ENCODE measurements at regions of chr22 and their contacts with region 1.

Region 1: GRCh38 chr22:30289134-30289979 is at the start of gene CASTOR1:
- DNase-seq: peak; percentile 92
- H3K4me3 Mint-ChIP-seq: peak within 1 kb of the TSS; percentile 87
- H3K27ac Mint-ChIP-seq: peak within 1 kb of the TSS; percentile 80
- H3K4me1 Mint-ChIP-seq: peaks cover 35% of the 10 kb centered on the region
- H3K27me3 Mint-ChIP-seq: no peaks in the 10 kb centered on the region
- total RNA-seq, gene CASTOR1: 11.1 TPM in 2 replicates

Region 2: GRCh38 chr22:30253205-30253852 is 36.0 kb before region 1 on chr22:
- intact Hi-C with region 1: loop called (anchors 5 kb)
- DNase-seq: no peak
- H3K4me3 Mint-ChIP-seq: no peak overlapping the region
- H3K27ac Mint-ChIP-seq: peak overlapping the region; percentile 79
- H3K4me1 Mint-ChIP-seq: peaks cover 58% of the 10 kb centered on the region
- H3K27me3 Mint-ChIP-seq: no peaks in the 10 kb centered on the region

Region 3: DNA sequence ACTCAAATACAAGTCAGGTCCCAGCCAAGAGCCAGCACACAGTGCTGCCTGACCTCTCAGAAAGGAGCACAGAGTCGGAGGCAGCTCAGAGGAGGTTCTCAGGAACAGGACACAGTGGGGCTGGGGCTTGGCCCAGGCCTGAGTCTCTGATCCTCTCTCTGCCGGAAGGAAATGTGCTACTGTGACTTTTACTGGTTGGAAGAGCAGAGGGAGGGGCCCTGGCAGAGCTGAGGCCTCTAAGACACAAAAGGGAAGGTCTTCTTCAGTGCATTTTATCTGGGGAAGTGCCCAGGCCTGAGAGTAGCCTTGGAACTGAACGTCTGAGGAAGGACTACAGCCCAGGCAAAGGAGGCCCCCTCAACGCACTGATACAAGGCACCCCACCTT is 16.2 kb after region 1 on chr22:
- intact Hi-C with region 1: loop called (anchors 1 kb)
- DNase-seq: peak; percentile 65
- H3K4me3 Mint-ChIP-seq: peak overlapping the region; percentile 70
- H3K27ac Mint-ChIP-seq: peak overlapping the region; percentile 87
- H3K4me1 Mint-ChIP-seq: peaks cover 89% of the 10 kb centered on the region
- H3K27me3 Mint-ChIP-seq: no peaks in the 10 kb centered on the region

Region 4: GRCh38 chr22:30356449-30357235 is 67.3 kb after region 1 on chr22 and contains the starts of genes CCDC157 and SF3A1:
- intact Hi-C with region 1: loop called (anchors 1 kb)
- DNase-seq: peak; percentile 86
- H3K4me3 Mint-ChIP-seq: peak within 1 kb of the TSS; percentile 91
- H3K27ac Mint-ChIP-seq: peak within 1 kb of the TSS; percentile 89
- H3K4me1 Mint-ChIP-seq: peaks cover 34% of the 10 kb centered on the region
- H3K27me3 Mint-ChIP-seq: peaks cover 2% of the 10 kb centered on the region
- total RNA-seq, gene CCDC157: 3.2 and 4.3 TPM in 2 replicates
- total RNA-seq, gene SF3A1: 287 and 325 TPM in 2 replicates

Region 5: DNA sequence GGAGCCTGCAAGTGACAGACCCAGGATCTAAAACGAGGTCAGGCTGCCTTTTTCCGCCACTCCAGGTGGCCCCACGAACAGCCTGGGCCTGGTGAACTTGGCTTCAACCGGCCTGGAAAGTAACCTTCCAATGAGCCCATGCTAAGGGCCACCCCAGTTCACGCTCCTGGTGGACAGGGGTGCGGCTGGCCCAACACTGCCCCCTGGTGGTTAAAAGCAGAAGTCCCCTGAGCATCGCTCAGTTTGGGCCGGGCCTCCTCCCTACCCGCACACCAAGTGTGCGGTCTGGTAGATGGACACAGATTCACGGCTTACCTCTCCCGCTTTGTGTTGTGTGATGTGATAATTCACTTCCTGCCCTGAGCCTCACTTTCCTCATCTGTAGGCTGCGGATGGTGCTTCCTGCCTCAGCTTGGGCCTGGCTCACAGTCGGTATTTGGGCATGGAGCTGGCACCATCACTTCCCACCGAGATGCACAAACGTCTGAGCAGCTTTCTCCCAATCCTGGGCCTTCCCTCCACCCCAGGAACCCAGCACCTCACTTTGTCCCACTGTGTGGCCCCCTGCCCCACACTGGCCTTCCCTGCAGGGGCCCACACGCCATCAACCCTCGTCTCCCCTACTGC is 196.1 kb after region 1 on chr22:
- intact Hi-C with region 1: loop called (anchors 5 kb)
- DNase-seq: peak; percentile 68
- H3K4me3 Mint-ChIP-seq: no peak overlapping the region
- H3K27ac Mint-ChIP-seq: no peak overlapping the region
- H3K4me1 Mint-ChIP-seq: no peaks in the 10 kb centered on the region
- H3K27me3 Mint-ChIP-seq: no peaks in the 10 kb centered on the region

Region 6: DNA sequence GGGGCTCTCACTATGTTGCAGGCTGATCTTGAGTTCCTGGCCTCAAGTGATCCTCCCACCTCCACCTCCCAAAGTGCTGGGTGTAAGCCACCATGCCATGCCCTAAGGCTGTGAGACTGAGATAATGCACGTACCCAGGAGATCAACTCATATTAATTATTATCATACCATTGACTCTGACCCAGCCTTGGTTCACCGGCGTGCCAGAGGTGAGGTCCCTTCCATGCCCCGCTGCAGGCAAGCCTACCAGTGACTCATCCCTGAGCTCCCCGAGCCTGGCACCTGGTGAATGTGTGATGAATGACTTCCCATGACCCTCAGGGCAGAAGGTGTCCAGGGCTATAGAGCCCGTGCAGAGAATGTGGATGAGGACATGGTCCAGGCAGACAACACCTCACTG is 273.0 kb after region 1 on chr22:
- intact Hi-C with region 1: no loop called
- DNase-seq: no peak
- H3K4me3 Mint-ChIP-seq: no peak overlapping the region
- H3K27ac Mint-ChIP-seq: no peak overlapping the region
- H3K4me1 Mint-ChIP-seq: no peaks in the 10 kb centered on the region
- H3K27me3 Mint-ChIP-seq: no peaks in the 10 kb centered on the region